CD8-positive, alpha-beta T cell (primary cell): ENCODE measurements at regions of chr10 and their contacts with region 1.

Region 1: GRCh38 chr10:73246783-73247508 is at the start of gene DNAJC9:
- DNase-seq: peak; percentile 95 to 98 (median 97)
- ATAC-seq: peak; percentile 88
- H3K4me3 ChIP-seq: peak within 1 kb of the TSS; percentile 88 to 95
- H3K4me3 Mint-ChIP-seq: peak within 1 kb of the TSS; percentile 96
- H3K27ac ChIP-seq: peak within 1 kb of the TSS; percentile 85 to 89
- H3K27ac Mint-ChIP-seq: peak within 1 kb of the TSS; percentile 97
- H3K4me1 ChIP-seq: peaks cover 34% of the 10 kb centered on the region
- H3K4me1 Mint-ChIP-seq: peaks cover 59% of the 10 kb centered on the region
- H3K27me3 ChIP-seq: no peaks in the 10 kb centered on the region
- H3K27me3 Mint-ChIP-seq: no peaks in the 10 kb centered on the region
- CTCF ChIP-seq: peak; percentile 19
- total RNA-seq, gene DNAJC9: 17.6 to 18.4 TPM

Region 2: DNA sequence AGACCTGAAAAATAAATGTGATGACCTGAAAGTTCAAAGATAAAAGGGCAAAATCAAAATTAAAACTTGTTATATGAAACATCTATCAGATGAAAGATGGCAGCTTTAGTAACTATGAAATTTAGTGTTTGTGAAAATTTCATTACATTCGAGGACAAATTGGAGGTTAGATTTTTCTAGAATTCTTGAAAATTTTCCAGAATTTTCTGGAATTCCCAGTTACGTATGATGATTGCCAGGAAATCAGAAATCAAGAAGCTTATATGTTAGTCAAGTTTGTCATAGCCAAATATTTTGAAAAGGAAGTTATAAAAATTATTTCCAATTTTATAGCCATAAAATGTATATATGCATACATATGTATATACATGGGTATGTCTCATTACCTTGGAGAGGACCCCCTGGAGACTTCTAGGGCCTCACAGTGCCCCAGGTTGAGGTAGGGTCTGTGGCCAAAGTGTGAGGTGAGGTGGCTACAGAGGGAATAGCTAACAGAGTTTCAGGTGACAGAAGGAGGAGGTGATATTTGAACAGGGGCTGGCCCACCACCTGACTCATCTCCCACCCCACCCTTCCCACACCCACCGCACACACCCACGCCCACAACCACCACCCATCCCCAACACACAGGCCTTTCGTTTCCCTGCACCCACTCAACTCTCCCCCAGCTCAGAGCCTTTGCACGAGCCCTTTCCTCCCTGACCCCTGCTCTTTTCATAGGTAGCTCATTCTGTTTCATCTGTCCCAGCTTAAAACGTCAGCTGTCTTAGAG is 1548.8 kb before region 1 on chr10:
- CTCF ChIA-PET with region 1: no interaction called
- POLR2A ChIA-PET with region 1: no interaction called
- intact Hi-C with region 1: no loop called
- DNase-seq: peak in 8 of 9 experiments; percentile 19 to 80 (median 50)
- ATAC-seq: peak; percentile 66
- H3K4me3 ChIP-seq: no peak overlapping the region
- H3K4me3 Mint-ChIP-seq: peak overlapping the region; percentile 39
- H3K27ac ChIP-seq: peak overlapping the region in 1 of 2 experiments; percentile 52
- H3K27ac Mint-ChIP-seq: no peak overlapping the region
- H3K4me1 ChIP-seq: peaks cover 49% of the 10 kb centered on the region
- H3K4me1 Mint-ChIP-seq: peaks cover 49% of the 10 kb centered on the region
- H3K27me3 ChIP-seq: no peaks in the 10 kb centered on the region
- H3K27me3 Mint-ChIP-seq: no peaks in the 10 kb centered on the region
- CTCF ChIP-seq: no peak

Region 3: DNA sequence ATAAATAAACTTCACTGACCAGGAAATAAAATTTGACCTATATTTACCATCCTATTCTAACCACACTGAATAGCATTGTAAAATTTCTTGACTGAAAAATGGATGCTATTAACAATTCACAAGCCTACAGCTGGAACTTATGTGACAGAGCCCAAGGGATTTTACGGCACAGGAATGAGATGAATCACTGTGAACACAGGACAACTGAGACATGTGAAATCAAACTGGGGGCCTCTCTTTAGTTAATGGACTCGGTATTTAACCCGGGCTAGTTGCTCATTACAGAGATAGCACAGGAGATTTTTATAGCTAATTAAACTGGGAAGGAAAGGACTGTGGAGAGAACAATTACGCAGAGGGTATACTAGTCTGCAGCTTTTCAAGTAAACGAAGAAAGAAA is 721.7 kb before region 1 on chr10:
- CTCF ChIA-PET with region 1: no interaction called
- POLR2A ChIA-PET with region 1: no interaction called
- intact Hi-C with region 1: no loop called
- DNase-seq: no peak
- ATAC-seq: no peak
- H3K4me3 ChIP-seq: no peak overlapping the region
- H3K4me3 Mint-ChIP-seq: no peak overlapping the region
- H3K27ac ChIP-seq: no peak overlapping the region
- H3K27ac Mint-ChIP-seq: no peak overlapping the region
- H3K4me1 ChIP-seq: no peaks in the 10 kb centered on the region
- H3K4me1 Mint-ChIP-seq: no peaks in the 10 kb centered on the region
- H3K27me3 ChIP-seq: no peaks in the 10 kb centered on the region
- H3K27me3 Mint-ChIP-seq: no peaks in the 10 kb centered on the region
- CTCF ChIP-seq: no peak

Region 4: GRCh38 chr10:72625608-72626443 is 621.1 kb before region 1 on chr10 and contains the start of gene MICU1:
- CTCF ChIA-PET with region 1: no interaction called
- POLR2A ChIA-PET with region 1: no interaction called
- intact Hi-C with region 1: loop called in 1 of 2 experiments (anchors 5 kb)
- DNase-seq: peak; percentile 84 to 97 (median 93)
- ATAC-seq: peak; percentile 99
- H3K4me3 ChIP-seq: peak within 1 kb of the TSS; percentile 91 to 99
- H3K4me3 Mint-ChIP-seq: peak within 1 kb of the TSS; percentile 98
- H3K27ac ChIP-seq: peak within 1 kb of the TSS; percentile 63 to 64
- H3K27ac Mint-ChIP-seq: peak within 1 kb of the TSS; percentile 92
- H3K4me1 ChIP-seq: peaks cover 11% of the 10 kb centered on the region
- H3K4me1 Mint-ChIP-seq: peaks cover 23% of the 10 kb centered on the region
- H3K27me3 ChIP-seq: no peaks in the 10 kb centered on the region
- H3K27me3 Mint-ChIP-seq: no peaks in the 10 kb centered on the region
- CTCF ChIP-seq: no peak
- total RNA-seq, gene MICU1: 8.2 to 11.3 TPM

Region 5: GRCh38 chr10:73110345-73110849 is 136.5 kb before region 1 on chr10 and contains the start of gene NUDT13:
- CTCF ChIA-PET with region 1: no interaction called
- POLR2A ChIA-PET with region 1: no interaction called
- intact Hi-C with region 1: loop called in 1 of 2 experiments (anchors 2 kb)
- DNase-seq: peak; percentile 10 to 79 (median 48)
- ATAC-seq: peak; percentile 91
- H3K4me3 ChIP-seq: peak within 1 kb of the TSS; percentile 57 to 59
- H3K4me3 Mint-ChIP-seq: peak within 1 kb of the TSS; percentile 95
- H3K27ac ChIP-seq: peak within 1 kb of the TSS; percentile 36 to 73
- H3K27ac Mint-ChIP-seq: peak within 1 kb of the TSS; percentile 89
- H3K4me1 ChIP-seq: no peaks in the 10 kb centered on the region
- H3K4me1 Mint-ChIP-seq: peaks cover 12% of the 10 kb centered on the region
- H3K27me3 ChIP-seq: no peaks in the 10 kb centered on the region
- H3K27me3 Mint-ChIP-seq: no peaks in the 10 kb centered on the region
- CTCF ChIP-seq: no peak
- total RNA-seq, gene NUDT13: 0.50 to 0.71 TPM

Region 6: DNA sequence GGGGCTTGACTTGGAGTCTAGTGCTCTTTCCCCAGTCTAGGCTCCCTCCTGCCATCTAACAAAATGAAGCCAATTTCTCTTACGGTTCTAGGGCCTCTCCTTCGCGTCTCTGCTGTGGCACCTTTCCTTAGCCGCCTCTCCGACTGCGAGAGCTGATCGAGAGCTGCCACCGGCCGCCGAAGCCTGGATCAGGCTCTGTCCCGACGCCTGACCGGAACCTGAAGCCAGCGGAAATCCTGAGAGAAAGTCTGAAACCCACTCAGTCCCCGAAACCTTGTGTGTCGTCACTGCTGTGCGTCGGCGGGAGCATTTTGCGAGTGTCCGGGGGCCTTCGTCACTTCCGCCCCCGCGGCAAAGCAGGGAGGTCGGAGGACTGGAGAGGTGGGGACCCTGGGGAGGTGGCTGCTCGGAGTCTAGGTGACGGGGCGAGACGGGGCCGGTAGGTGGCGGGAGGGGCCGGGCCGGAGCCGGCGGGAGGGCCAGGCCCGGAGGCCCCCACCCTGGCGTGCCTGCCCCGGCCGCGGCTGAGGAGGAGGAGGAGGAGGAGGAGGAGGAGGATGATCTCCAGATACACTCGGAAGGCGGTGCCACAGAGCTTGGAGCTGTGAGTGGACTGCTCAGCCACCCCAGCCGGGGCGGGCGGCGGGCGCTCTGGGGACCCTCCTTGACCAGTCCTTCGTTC is 79.0 kb before region 1 on chr10 and contains the starts of genes ECD and FAM149B1:
- CTCF ChIA-PET with region 1: no interaction called
- POLR2A ChIA-PET with region 1: interaction called, 6 read pairs
- intact Hi-C with region 1: loop called (anchors 1 to 2 kb)
- DNase-seq: peak; percentile 74 to 96 (median 91)
- ATAC-seq: peak; percentile 93
- H3K4me3 ChIP-seq: peak within 1 kb of the TSS; percentile 77 to 92
- H3K4me3 Mint-ChIP-seq: peak within 1 kb of the TSS; percentile 100
- H3K27ac ChIP-seq: peak within 1 kb of the TSS; percentile 93 to 97
- H3K27ac Mint-ChIP-seq: peak within 1 kb of the TSS; percentile 100
- H3K4me1 ChIP-seq: peaks cover 29% of the 10 kb centered on the region
- H3K4me1 Mint-ChIP-seq: peaks cover 42% of the 10 kb centered on the region
- H3K27me3 ChIP-seq: no peaks in the 10 kb centered on the region
- H3K27me3 Mint-ChIP-seq: no peaks in the 10 kb centered on the region
- CTCF ChIP-seq: peak; percentile 16
- total RNA-seq, gene ECD: 56.5 to 59.1 TPM
- total RNA-seq, gene FAM149B1: 5.9 to 6.3 TPM

Region 7: DNA sequence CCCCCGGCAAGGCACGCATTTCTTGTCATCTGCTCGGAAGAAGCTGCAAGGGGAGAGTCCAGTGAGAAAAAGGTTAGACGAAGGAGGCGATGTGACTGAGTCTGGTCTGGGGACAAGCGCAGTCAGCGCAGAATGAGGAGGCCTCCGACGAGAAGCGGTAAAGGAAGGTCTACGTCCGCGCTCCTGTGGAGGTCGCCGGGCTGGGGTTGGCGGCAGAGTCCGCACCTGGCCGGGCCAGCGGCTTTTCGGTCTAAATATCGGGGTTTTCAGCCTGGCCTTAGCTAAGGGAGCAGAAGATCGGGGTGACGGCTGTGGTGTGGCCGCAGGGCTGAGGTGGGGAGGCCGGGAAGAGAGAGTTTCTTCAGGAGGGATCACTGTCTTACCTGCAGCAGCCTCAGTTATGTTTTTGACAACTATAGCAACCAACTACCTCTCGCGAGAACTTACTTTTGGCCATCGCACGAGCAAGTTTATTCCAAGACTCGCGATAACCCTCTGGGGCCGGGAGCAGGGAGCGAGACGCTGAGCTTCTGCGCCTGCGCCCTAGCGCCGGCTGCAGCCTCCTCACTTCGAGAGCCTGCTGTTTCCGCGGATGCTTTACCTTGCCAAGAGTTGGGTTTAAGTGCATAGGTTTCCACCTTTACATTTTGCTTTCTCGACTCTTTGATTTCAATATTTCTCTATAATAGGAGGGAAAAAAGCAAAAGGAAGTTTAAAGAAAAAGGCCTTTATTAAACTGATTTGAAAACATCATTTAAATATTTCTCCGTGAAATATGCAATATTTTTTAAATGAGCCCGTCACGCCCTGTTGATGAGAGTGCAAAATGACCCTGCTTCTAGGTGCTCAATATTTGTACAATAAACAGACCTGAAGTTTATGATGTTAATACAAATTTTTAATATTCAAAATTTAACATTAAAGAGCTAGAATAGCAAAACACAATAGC is 111.7 kb after region 1 on chr10 and contains the start of gene CFAP70:
- CTCF ChIA-PET with region 1: no interaction called
- POLR2A ChIA-PET with region 1: no interaction called
- intact Hi-C with region 1: loop called (anchors 1 to 2 kb)
- DNase-seq: peak; percentile 83 to 98 (median 90)
- ATAC-seq: peak; percentile 96
- H3K4me3 ChIP-seq: peak within 1 kb of the TSS; percentile 71 to 75
- H3K4me3 Mint-ChIP-seq: peak within 1 kb of the TSS; percentile 98
- H3K27ac ChIP-seq: peak within 1 kb of the TSS; percentile 78 to 88
- H3K27ac Mint-ChIP-seq: peak within 1 kb of the TSS; percentile 96
- H3K4me1 ChIP-seq: peaks cover 5% of the 10 kb centered on the region
- H3K4me1 Mint-ChIP-seq: peaks cover 16% of the 10 kb centered on the region
- H3K27me3 ChIP-seq: peaks cover 0 to 8% of the 10 kb centered on the region in 2 experiments
- H3K27me3 Mint-ChIP-seq: peaks cover 2% of the 10 kb centered on the region
- CTCF ChIP-seq: no peak
- total RNA-seq, gene CFAP70: 2.4 to 2.8 TPM

Region 8: GRCh38 chr10:73413528-73414229 is 166.7 kb after region 1 on chr10 and contains the start of gene ANXA7:
- CTCF ChIA-PET with region 1: no interaction called
- POLR2A ChIA-PET with region 1: no interaction called
- intact Hi-C with region 1: loop called (anchors 2 kb)
- DNase-seq: peak; percentile 85 to 95 (median 94)
- ATAC-seq: peak; percentile 95
- H3K4me3 ChIP-seq: peak within 1 kb of the TSS; percentile 85 to 97
- H3K4me3 Mint-ChIP-seq: peak within 1 kb of the TSS; percentile 88
- H3K27ac ChIP-seq: peak within 1 kb of the TSS; percentile 95 to 96
- H3K27ac Mint-ChIP-seq: peak within 1 kb of the TSS; percentile 92
- H3K4me1 ChIP-seq: peaks cover 14% of the 10 kb centered on the region
- H3K4me1 Mint-ChIP-seq: peaks cover 47% of the 10 kb centered on the region
- H3K27me3 ChIP-seq: no peaks in the 10 kb centered on the region
- H3K27me3 Mint-ChIP-seq: no peaks in the 10 kb centered on the region
- CTCF ChIP-seq: no peak
- total RNA-seq, gene ANXA7: 94.8 to 95.6 TPM